Heart right ventricle (tissue), 16 donors: ENCODE measurements at regions of chr9 and their contacts with region 1.

Region 1: DNA sequence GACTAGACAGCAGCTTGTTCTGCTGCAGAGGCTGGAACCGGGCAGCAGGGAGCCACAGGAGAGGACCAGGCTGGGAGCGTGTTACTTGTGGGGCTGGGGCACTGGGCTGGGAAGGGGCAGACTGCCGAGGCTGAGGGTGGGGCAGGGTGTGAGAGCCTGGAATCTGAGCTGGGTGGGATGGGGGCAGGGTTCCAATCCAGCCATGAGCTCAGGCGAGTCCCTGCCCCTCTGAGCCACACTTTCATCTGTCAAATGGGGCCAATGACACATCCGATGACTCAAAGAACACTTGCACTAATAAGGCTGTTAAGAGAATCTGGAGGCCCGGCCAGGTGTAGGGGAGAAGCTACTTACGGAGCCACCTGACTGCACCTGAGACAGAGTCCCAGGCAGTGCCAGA is 18.7 kb upstream of the WDR38 start:
- DNase-seq: no peak
- ATAC-seq: peak in 7 of 8 donors; percentile 2 to 31 (median 12)
- H3K4me3 ChIP-seq: no peak overlapping the region
- H3K27ac ChIP-seq: peak overlapping the region; percentile 60 to 96 (median 88)
- H3K4me1 ChIP-seq: peaks cover 25 to 62% (median 50%) of the 10 kb centered on the region in 9 donors
- H3K27me3 ChIP-seq: peaks cover 0 to 6% (median 0%) of the 10 kb centered on the region in 7 donors
- CTCF ChIP-seq: no peak

Region 2: GRCh38 chr9:124228516-124228915 is 606.1 kb before region 1 on chr9:
- intact Hi-C with region 1: no loop called
- DNase-seq: no peak
- ATAC-seq: no peak
- H3K4me3 ChIP-seq: no peak overlapping the region
- H3K27ac ChIP-seq: no peak overlapping the region
- H3K4me1 ChIP-seq: peaks cover 0 to 10% (median 7%) of the 10 kb centered on the region in 9 donors
- H3K27me3 ChIP-seq: peaks cover 0 to 4% (median 0%) of the 10 kb centered on the region in 7 donors
- CTCF ChIP-seq: no peak

Region 3: DNA sequence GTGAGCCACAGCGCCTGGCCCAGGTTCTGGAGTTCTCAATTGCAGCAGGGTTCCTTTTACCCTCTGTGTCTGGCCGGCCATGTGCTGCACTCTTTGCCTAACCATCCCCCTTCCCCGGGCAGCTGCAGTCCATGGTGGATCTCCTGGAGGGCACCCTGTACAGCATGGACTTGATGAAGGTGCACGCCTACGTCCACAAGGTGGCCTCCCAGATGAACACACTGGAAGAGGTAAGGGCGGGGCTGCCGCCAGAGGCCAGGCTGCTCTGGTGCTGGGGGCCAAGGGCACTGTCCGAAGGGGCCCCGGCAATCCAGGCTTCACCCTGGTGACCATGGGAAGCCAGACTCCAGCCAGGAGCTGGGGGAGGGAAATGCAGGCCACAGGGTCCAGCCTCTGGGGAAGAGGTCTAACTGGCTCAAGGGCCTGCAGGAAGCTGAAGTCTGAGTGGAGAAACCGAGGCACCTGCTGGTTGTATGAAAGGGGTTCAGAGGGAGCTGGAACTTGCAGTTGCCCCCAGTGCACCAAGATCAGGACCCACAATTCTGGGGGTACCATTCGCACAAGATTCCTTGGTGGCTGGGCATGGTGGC is 39.6 kb before region 1 on chr9:
- intact Hi-C with region 1: loop called in 5 of 10 experiments (anchors 2 to 5 kb)
- DNase-seq: no peak
- ATAC-seq: peak; percentile 16 to 45 (median 29)
- H3K4me3 ChIP-seq: no peak overlapping the region
- H3K27ac ChIP-seq: peak overlapping the region in 7 of 10 donors; percentile 24 to 76 (median 61)
- H3K4me1 ChIP-seq: peaks cover 19 to 79% (median 46%) of the 10 kb centered on the region in 9 donors
- H3K27me3 ChIP-seq: no peaks in the 10 kb centered on the region
- CTCF ChIP-seq: peak in 5 of 9 donors; percentile 6 to 28 (median 25)